ENCODE measurements at regions of chr1 and their contacts with region 1.

Region 1: DNA sequence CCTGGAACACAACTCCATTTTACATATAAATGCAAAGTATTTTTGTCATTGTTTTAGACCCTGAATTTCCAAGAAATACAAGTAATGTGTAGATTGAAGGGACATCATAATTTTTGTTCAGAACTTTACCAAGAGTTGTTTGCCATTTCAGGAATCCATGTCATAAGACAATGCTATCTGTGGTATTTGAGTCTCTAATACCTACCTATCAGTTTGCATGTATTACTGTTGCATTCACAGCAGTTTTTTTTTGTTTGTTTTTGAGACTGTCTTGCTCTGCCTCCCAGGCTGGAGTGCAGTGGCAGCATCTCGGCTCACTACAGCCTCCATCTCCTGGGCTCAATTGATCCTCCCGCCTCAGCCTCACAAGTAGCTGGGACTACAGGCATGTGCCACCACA is 17.1 kb downstream of the MPZ start:
- DNase-seq: no peak
- H3K4me3 ChIP-seq: no peak overlapping the region
- H3K27ac ChIP-seq: no peak overlapping the region
- H3K4me1 ChIP-seq: peaks cover 0 to 2% (median 0%) of the 10 kb centered on the region in 4 experiments; a peak in 1 of 7 replicates
- H3K27me3 ChIP-seq: no peaks in the 10 kb centered on the region
- CTCF ChIP-seq: no peak
- EP300 ChIP-seq: no peak
- POLR2A ChIP-seq: no peak
- RAD21 ChIP-seq: no peak

Region 2: GRCh38 chr1:161121834-161122233 is 170.8 kb before region 1 on chr1:
- CTCF ChIA-PET with region 1: no interaction called
- POLR2A ChIA-PET with region 1: no interaction called
- DNase-seq: no peak
- H3K4me3 ChIP-seq: no peak overlapping the region
- H3K27ac ChIP-seq: no peak overlapping the region
- H3K4me1 ChIP-seq: peaks cover 4 to 10% (median 5%) of the 10 kb centered on the region in 4 experiments; a peak in 6 of 7 replicates
- H3K27me3 ChIP-seq: no peaks in the 10 kb centered on the region
- CTCF ChIP-seq: no peak
- EP300 ChIP-seq: no peak
- POLR2A ChIP-seq: no peak
- RAD21 ChIP-seq: no peak

Region 3: DNA sequence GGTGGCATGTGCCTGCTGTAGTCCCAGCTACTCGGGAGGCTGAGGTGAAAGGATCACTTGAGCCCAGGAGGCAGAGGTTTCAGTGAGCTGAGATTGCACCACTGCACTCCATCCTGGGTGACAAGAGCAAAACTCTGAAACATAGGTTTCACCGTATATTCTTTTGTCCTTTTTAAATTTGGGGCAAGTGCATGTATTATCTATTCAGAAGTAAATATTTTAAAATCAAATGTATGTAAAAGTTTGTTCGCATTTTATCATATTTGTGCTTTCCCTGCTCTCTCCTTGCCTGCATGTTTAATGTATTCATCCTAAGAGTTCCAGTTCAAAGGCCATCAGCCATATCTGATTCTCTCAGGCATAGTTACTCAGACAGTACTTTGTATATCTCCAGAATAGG is 146.8 kb before region 1 on chr1:
- CTCF ChIA-PET with region 1: no interaction called
- POLR2A ChIA-PET with region 1: no interaction called
- DNase-seq: no peak
- H3K4me3 ChIP-seq: no peak overlapping the region
- H3K27ac ChIP-seq: no peak overlapping the region
- H3K4me1 ChIP-seq: no peaks in the 10 kb centered on the region
- H3K27me3 ChIP-seq: no peaks in the 10 kb centered on the region
- CTCF ChIP-seq: no peak
- EP300 ChIP-seq: no peak
- POLR2A ChIP-seq: no peak
- RAD21 ChIP-seq: no peak

Region 4: DNA sequence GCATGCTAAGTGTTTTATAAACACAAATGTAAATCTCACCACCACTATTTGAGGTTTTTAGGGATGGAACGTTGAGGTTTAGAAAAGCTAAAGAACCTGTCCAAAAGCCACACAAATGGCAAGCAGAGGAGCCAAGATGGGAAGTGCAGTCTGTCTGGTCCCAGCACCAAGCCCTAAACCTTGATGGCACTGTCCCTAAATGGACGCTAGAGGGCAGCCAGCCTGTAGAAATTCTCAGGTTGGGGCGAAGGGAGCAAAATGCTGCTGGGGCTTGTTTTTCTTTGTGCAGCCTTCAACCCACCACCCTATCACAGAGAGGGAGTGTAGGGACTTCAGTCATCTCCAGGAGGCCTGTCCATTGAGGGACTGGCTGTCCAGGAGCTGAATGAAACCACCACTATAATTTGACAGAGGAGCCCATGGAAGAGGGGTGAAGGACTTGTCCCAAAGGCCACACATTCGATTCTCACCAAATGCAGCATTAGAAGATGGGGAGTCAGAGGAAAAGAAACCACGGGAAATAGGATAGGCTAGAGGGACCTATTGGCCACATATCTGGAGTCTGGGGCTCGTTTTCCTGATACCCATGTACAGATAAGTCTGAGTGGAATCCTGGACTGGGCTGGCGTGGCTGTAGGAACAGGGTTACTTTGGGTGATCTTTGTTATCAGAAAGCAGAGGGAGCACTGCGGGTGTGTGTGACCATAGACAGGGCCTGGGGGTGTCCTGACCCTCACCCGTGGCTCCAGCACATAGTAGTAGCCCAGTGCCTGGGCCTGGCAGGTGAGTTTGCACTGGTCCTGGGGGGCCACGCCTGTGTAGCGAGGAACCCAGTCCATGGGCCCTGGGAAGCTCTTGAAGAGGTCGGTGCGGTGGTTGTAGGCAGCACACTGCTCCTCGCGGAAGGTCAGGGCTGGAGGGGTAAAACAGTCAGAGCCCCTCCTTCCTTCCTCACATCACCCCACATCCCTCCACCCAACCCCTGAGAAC is 99.9 kb before region 1 on chr1:
- CTCF ChIA-PET with region 1: interaction called, 10 read pairs
- POLR2A ChIA-PET with region 1: no interaction called
- DNase-seq: peak in 1 of 2 experiments; percentile 70
- H3K4me3 ChIP-seq: no peak overlapping the region
- H3K27ac ChIP-seq: no peak overlapping the region
- H3K4me1 ChIP-seq: peaks cover 3 to 12% (median 11%) of the 10 kb centered on the region in 4 experiments
- H3K27me3 ChIP-seq: no peaks in the 10 kb centered on the region; a peak in 1 of 7 replicates
- CTCF ChIP-seq: peak; percentile 83 to 97 (median 83)
- EP300 ChIP-seq: no peak
- POLR2A ChIP-seq: no peak
- RAD21 ChIP-seq: peak; percentile 81 to 84

Region 5: GRCh38 chr1:161238039-161238473 is 54.6 kb before region 1 on chr1 and contains the start of gene NR1I3:
- CTCF ChIA-PET with region 1: interaction called, 401 read pairs
- POLR2A ChIA-PET with region 1: interaction called, 7 read pairs
- DNase-seq: no peak
- H3K4me3 ChIP-seq: no peak within 1 kb of the TSS
- H3K27ac ChIP-seq: no peak within 1 kb of the TSS
- H3K4me1 ChIP-seq: no peaks in the 10 kb centered on the region
- H3K27me3 ChIP-seq: no peaks in the 10 kb centered on the region
- CTCF ChIP-seq: no peak
- EP300 ChIP-seq: no peak
- POLR2A ChIP-seq: no peak
- RAD21 ChIP-seq: no peak
- total RNA-seq, gene NR1I3: not detected in 2 replicates

Region 6: DNA sequence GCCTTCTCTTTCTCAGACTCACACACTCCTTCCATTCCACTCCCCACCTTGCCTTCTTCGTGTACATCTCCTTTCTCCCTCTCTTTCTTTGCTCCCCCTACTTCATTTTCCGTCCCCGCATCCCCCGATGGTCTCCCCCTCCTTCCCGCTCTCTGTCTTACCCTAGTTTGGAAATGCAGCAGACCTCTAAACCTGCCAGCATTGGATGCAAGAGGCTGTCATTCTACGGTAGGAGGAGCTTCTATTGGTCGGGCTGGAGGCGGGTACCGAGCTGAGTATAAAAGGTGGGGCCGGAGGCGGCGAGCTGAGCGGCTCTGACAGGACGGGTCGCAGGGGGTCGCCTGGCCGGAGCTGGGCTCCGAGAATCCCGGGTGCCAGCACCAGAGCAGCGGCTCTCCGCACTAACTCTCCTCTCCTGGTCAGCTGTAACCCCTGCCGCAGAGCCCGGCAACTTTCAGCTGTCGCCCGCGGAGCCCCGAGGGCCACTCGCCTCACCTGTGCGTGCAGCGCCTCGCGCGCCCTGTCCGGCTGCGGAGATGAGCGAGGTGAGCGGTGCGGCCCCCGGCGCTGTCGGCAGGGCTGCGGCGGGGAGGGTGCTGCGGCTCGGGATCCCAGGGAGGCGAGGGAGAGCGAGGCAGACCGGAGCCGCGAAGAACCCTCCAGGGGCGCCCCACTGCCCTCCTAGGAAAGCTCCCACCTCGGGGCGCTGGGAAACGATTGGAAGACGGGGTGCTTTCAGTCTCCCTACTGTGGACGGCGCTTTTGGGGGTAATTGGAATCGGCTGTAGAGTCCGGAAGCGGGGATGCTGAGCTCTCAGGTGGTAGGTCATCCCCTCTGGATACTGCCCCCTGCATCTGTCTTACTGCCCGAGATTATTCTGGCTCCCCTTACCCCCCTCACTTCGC is 33.9 kb before region 1 on chr1 and contains the start of gene PCP4L1:
- CTCF ChIA-PET with region 1: interaction called, 28 read pairs
- POLR2A ChIA-PET with region 1: interaction called, 3 read pairs
- DNase-seq: peak; percentile 68 to 91
- H3K4me3 ChIP-seq: peak within 1 kb of the TSS; percentile 51 to 68 (median 64)
- H3K27ac ChIP-seq: no peak within 1 kb of the TSS
- H3K4me1 ChIP-seq: peaks cover 0 to 8% (median 3%) of the 10 kb centered on the region in 4 experiments; a peak in 3 of 7 replicates
- H3K27me3 ChIP-seq: peaks cover 7 to 25% (median 22%) of the 10 kb centered on the region in 4 experiments
- CTCF ChIP-seq: no peak
- EP300 ChIP-seq: no peak
- POLR2A ChIP-seq: peak in 1 of 2 experiments; percentile 82; a peak in 2 of 3 replicates
- RAD21 ChIP-seq: no peak
- total RNA-seq, gene PCP4L1: 1.0 and 1.9 TPM in 2 replicates

Region 7: GRCh38 chr1:161274874-161275273 is 17.8 kb before region 1 on chr1:
- CTCF ChIA-PET with region 1: interaction called, 16 read pairs
- POLR2A ChIA-PET with region 1: interaction called, 5 read pairs
- DNase-seq: no peak
- H3K4me3 ChIP-seq: no peak overlapping the region
- H3K27ac ChIP-seq: no peak overlapping the region
- H3K4me1 ChIP-seq: no peaks in the 10 kb centered on the region
- H3K27me3 ChIP-seq: no peaks in the 10 kb centered on the region
- CTCF ChIP-seq: no peak
- EP300 ChIP-seq: no peak
- POLR2A ChIP-seq: no peak
- RAD21 ChIP-seq: no peak

Region 8: GRCh38 chr1:161351482-161351881 is 58.9 kb after region 1 on chr1:
- CTCF ChIA-PET with region 1: no interaction called
- POLR2A ChIA-PET with region 1: no interaction called
- DNase-seq: no peak
- H3K4me3 ChIP-seq: no peak overlapping the region
- H3K27ac ChIP-seq: no peak overlapping the region
- H3K4me1 ChIP-seq: no peaks in the 10 kb centered on the region
- H3K27me3 ChIP-seq: no peaks in the 10 kb centered on the region
- CTCF ChIP-seq: no peak
- EP300 ChIP-seq: no peak
- POLR2A ChIP-seq: no peak
- RAD21 ChIP-seq: no peak